Ascending aorta (tissue), 2 donors: ENCODE measurements at regions of chr11 and their contacts with region 1.

Region 1: GRCh38 chr11:27506200-27507182 is at the start of gene LIN7C:
- DNase-seq: peak; percentile 91 to 98
- H3K4me3 ChIP-seq: peak within 1 kb of the TSS; percentile 87
- H3K27ac ChIP-seq: peak within 1 kb of the TSS; percentile 94
- H3K4me1 ChIP-seq: peaks cover 8 to 10% of the 10 kb centered on the region in 2 donors
- H3K27me3 ChIP-seq: no peaks in the 10 kb centered on the region
- CTCF ChIP-seq: peak in 1 of 3 experiments; percentile 6
- total RNA-seq, gene LIN7C: 15.1 TPM

Region 2: GRCh38 chr11:27545946-27546345 is 39.5 kb after region 1 on chr11:
- intact Hi-C with region 1: no loop called
- DNase-seq: no peak
- H3K4me3 ChIP-seq: no peak overlapping the region
- H3K27ac ChIP-seq: no peak overlapping the region
- H3K4me1 ChIP-seq: no peaks in the 10 kb centered on the region
- H3K27me3 ChIP-seq: no peaks in the 10 kb centered on the region
- CTCF ChIP-seq: no peak

Region 3: DNA sequence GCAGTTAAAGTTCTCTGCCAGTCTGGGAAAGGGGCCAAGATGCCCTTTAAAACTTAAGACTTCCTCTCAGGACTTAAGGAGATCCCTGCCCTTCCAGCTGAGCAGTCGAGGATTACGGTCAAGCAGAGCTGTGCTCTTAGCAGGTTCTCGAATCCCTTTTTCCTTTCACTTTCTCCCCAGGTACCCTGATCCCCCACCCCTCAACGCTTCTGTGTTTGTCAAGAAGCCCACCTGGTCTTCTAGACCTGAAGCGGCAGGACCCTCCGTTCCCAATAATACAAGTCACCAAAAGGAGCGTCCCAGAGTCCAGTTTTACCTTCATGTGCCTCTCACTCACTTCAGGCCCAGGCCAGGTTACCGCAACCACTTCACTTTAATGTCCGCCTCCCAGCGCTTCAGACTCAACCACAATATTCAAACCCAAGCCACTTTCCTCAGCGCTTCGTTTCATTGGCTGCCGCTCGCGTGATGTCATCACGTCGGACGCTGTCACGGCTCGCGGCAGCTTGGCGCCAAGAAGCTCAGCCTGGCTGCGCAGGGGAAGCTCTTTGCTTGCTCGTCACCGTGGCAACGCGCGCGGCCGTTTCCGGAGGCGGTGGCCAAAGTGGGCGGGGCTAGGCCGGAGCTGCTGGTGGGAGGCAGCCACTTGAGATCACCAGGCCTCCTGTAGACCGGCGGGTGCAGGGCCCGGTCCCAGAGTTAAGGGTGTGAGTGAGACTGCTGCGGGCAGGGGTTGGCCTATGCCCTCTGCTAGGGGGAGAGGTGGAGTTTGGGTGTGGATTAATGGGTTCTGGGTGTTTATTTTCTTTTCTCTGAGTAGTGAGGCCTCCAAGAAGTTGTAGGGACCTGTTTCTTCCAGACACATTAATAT is 601.5 kb after region 1 on chr11 and contains the starts of genes KIF18A and METTL15:
- intact Hi-C with region 1: loop called (anchors 1 kb)
- DNase-seq: peak; percentile 98 to 100
- H3K4me3 ChIP-seq: peak within 1 kb of the TSS; percentile 74 to 76
- H3K27ac ChIP-seq: peak within 1 kb of the TSS; percentile 87 to 88
- H3K4me1 ChIP-seq: peaks cover 4 to 15% of the 10 kb centered on the region in 2 donors
- H3K27me3 ChIP-seq: no peaks in the 10 kb centered on the region
- CTCF ChIP-seq: no peak
- total RNA-seq, gene KIF18A: not detected
- total RNA-seq, gene METTL15: 0.32 TPM